ENCODE measurements at regions of chr6 and their contacts with region 1.

Region 1: DNA sequence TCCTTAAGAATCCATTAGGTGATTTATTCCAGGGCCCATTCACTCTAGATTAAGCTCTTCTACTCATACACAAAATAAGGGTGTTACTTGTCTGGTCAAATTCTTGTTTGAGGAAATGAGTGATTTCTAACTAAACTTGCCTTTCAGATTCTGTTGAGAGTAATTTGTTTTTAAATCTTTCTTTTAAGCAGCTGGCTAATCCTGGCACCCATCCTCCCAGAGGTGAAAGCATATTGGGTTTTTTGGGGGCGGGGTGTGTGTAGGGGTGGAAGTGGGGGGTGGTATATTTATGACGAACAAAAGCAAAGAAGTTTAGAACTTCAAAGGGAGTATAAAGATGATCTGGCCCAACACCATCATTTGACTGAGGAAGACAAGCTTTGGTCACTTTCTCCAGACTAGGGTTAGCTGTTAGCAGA is 94.7 kb downstream of the RTN4IP1 start:
- DNase-seq: no peak
- ATAC-seq: peak; percentile 23
- H3K4me3 Mint-ChIP-seq: peak overlapping the region; percentile 19
- H3K27ac Mint-ChIP-seq: peak overlapping the region; percentile 82
- H3K4me1 Mint-ChIP-seq: peaks cover 79% of the 10 kb centered on the region
- H3K27me3 Mint-ChIP-seq: no peaks in the 10 kb centered on the region
- CTCF ChIP-seq: no peak

Region 2: GRCh38 chr6:106300944-106301343 is 233.6 kb before region 1 on chr6:
- CTCF ChIA-PET with region 1: no interaction called
- POLR2A ChIA-PET with region 1: no interaction called
- intact Hi-C with region 1: no loop called
- DNase-seq: no peak
- ATAC-seq: no peak
- H3K4me3 Mint-ChIP-seq: no peak overlapping the region
- H3K27ac Mint-ChIP-seq: no peak overlapping the region
- H3K4me1 Mint-ChIP-seq: no peaks in the 10 kb centered on the region
- H3K27me3 Mint-ChIP-seq: no peaks in the 10 kb centered on the region
- CTCF ChIP-seq: no peak

Region 3: GRCh38 chr6:106546691-106547414 is 12.3 kb after region 1 on chr6:
- CTCF ChIA-PET with region 1: interaction called, 5 read pairs
- POLR2A ChIA-PET with region 1: interaction called, 10 read pairs
- intact Hi-C with region 1: loop called (anchors 1 kb)
- DNase-seq: no peak
- ATAC-seq: peak; percentile 81
- H3K4me3 Mint-ChIP-seq: peak overlapping the region; percentile 70
- H3K27ac Mint-ChIP-seq: peak overlapping the region; percentile 98
- H3K4me1 Mint-ChIP-seq: peaks cover 49% of the 10 kb centered on the region
- H3K27me3 Mint-ChIP-seq: no peaks in the 10 kb centered on the region
- CTCF ChIP-seq: no peak

Region 4: GRCh38 chr6:106666290-106667021 is 131.9 kb after region 1 on chr6:
- CTCF ChIA-PET with region 1: no interaction called
- POLR2A ChIA-PET with region 1: no interaction called
- intact Hi-C with region 1: no loop called
- DNase-seq: peak; percentile 49
- ATAC-seq: peak; percentile 99
- H3K4me3 Mint-ChIP-seq: peak overlapping the region; percentile 66
- H3K27ac Mint-ChIP-seq: peak overlapping the region; percentile 87
- H3K4me1 Mint-ChIP-seq: peaks cover 66% of the 10 kb centered on the region
- H3K27me3 Mint-ChIP-seq: no peaks in the 10 kb centered on the region
- CTCF ChIP-seq: no peak